ENCODE measurements at regions of chr3 and their contacts with region 1.

Region 1: GRCh38 chr3:128617557-128618397 is 32.8 kb downstream of the RPN1 start:
- DNase-seq: peak; percentile 96 to 100 (median 98)
- ATAC-seq: peak; percentile 96
- H3K4me3 ChIP-seq: peak overlapping the region; percentile 62 to 81
- H3K27ac ChIP-seq: peak overlapping the region; percentile 84 to 87
- H3K4me1 ChIP-seq: peaks cover 18 to 60% of the 10 kb centered on the region in 2 donors
- H3K27me3 ChIP-seq: no peaks in the 10 kb centered on the region
- CTCF ChIP-seq: peak; percentile 96 to 97

Region 2: DNA sequence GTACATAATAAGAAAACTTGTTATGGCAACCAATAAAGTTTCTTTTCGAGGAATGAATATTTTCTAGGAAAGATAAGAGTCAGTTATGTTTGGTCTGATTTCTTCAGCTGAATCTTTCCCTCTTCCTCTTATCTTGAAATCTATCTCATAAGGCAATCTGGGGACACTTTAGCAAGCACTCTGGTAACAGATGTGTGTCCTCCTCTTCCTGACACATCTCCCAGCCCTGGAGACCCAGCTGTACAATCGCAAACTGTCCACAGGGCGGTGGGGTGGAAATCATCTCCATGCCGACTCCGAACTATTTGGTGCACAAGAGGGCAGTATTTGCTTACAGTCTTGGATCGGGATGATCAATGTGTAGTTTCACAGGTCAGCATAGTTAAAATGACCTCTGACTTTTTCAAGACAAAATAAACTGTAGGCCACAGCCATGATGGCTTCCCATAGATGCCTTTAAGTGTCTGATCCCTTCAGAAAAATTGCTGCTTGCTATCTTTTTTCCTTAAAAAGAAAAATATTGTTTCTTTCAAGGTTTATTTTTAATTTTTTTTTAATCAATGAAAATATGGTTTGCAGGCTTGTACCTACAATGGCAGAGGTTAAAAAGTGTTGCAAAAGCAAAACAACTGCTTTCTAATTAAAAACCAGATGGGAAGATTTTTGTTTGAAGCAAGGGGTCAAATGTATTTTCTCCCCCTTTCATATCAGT is 446.8 kb before region 1 on chr3:
- intact Hi-C with region 1: loop called in 1 of 2 experiments (anchors 10 kb)
- DNase-seq: peak in 2 of 4 donors; percentile 69 to 86
- ATAC-seq: peak; percentile 79
- H3K4me3 ChIP-seq: no peak overlapping the region
- H3K27ac ChIP-seq: no peak overlapping the region
- H3K4me1 ChIP-seq: peaks cover 5 to 37% of the 10 kb centered on the region in 2 donors
- H3K27me3 ChIP-seq: no peaks in the 10 kb centered on the region
- CTCF ChIP-seq: peak; percentile 48 to 59

Region 3: GRCh38 chr3:128680602-128681368 is 63.0 kb after region 1 on chr3:
- intact Hi-C with region 1: no loop called
- DNase-seq: peak; percentile 96 to 100 (median 100)
- ATAC-seq: peak; percentile 98
- H3K4me3 ChIP-seq: peak overlapping the region; percentile 48 to 62
- H3K27ac ChIP-seq: peak overlapping the region; percentile 95 to 96
- H3K4me1 ChIP-seq: peaks cover 4 to 21% of the 10 kb centered on the region in 2 donors
- H3K27me3 ChIP-seq: no peaks in the 10 kb centered on the region
- CTCF ChIP-seq: peak; percentile 87 to 97

Measured in left lung (tissue), 14 donors.